GM18951 (cell line): ENCODE measurements at regions of chr20 and their contacts with region 1.

Region 1: DNA sequence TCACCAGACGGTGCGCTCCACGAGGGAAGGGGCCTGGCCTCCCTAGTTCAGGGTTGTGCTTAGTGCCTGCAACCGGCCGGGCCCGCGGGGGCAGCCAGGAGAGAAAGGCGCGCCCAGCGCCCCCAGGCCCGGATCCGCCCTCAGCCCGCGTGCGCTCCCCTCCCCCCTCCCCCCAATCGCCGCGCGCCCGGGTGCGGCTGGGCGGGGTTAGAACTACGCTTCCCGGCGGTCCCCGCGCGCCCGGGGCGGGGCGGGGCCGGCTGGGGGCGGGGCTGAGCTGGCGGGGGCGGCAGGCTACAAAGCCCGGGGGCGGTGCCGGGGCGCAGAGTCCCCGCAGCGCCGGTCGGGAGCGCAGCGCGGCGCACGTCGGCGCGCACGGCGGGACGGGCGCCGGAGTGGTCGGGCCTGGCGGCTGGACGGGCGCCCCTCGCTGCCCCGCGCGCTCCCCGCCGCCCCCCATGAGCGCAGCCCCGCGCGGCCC is at the start of gene RBM38:
- POLR2A ChIP-seq: peak; percentile 90

Region 2: GRCh38 chr20:57022312-57022711 is 368.8 kb before region 1 on chr20:
- in situ Hi-C with region 1: no loop called
- POLR2A ChIP-seq: no peak

Region 3: DNA sequence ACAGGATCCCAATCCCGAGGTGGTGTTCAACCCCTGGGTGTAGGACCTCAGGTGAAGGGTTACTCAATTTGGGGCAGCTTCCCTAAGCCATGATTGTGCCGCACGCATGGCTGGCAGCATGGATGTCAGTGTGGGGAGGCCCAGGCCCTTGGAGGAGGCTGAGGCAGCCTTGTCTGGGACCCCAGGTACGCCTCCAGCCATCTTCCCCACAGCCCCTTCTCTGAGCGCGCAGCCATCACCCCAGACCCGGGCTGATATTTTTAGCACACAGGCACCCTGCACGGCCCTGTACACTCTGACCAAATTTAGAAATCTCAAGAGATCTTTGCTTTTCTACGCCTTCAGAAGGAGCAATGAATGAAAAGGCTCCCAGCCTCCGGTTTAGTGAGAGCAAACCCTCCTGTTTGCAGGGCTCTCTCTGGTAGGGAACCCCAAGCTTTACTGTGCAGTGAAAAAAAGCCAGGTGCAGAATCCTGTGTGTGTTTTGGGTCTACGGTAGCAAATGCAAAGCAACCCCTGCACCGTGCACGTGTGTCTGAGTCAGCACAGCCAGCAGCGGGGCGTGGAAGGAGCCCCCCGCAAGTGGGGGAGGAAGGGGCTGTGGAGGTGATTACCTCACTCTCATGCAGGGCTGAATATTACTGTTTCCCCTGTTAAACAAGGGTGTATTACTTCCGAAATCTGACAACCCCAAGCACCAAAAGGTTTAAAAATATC is 89.5 kb after region 1 on chr20:
- in situ Hi-C with region 1: loop called (anchors 5 kb)
- POLR2A ChIP-seq: no peak

Region 4: GRCh38 chr20:58209652-58210397 is 818.7 kb after region 1 on chr20:
- in situ Hi-C with region 1: loop called (anchors 25 kb)
- POLR2A ChIP-seq: no peak